WTC11 (cell line): ENCODE measurements at regions of chr13 and their contacts with region 1.

Region 1: DNA sequence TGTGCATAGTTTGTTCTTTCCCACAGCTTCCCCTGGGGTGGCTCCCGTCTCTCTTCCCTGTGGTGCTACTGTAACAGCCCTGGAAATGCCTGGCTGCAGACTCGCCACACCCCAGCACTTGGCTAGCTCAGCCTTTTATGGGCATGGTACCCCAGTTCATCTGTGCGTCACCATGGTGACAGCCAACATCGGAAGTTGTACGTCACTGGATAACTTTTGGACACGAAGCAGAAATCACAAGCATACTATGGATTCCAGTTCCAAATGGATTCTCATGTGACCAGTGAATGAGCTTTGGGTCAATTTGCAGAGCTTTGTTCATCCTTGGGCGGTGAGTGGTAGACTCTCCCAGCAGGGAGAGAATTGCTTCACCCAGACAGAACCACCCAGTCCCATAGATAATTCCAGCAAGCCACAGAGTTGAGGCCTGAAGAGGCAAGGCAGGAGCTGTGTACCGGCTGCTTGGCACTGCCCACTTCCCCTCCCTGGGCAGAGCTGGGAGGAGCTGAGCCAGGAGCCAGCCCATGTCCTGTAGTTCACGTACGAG is 54.4 kb downstream of the COL4A2 start:
- DNase-seq: no peak
- ATAC-seq: no peak
- H3K4me3 Mint-ChIP-seq: no peak overlapping the region
- H3K27ac Mint-ChIP-seq: peak overlapping the region; percentile 84; the same call in 1 of the 2 replicates
- H3K4me1 Mint-ChIP-seq: peaks cover 4% of the 10 kb centered on the region
- H3K27me3 Mint-ChIP-seq: no peaks in the 10 kb centered on the region; the same call in 1 of the 2 replicates
- CTCF ChIP-seq: no peak

Region 2: GRCh38 chr13:110379905-110380341 is 18.5 kb after region 1 on chr13:
- CTCF ChIA-PET with region 1: interaction called, 33 read pairs
- POLR2A ChIA-PET with region 1: no interaction called
- DNase-seq: no peak
- ATAC-seq: peak; percentile 86
- H3K4me3 Mint-ChIP-seq: peak overlapping the region; percentile 37
- H3K27ac Mint-ChIP-seq: no peak overlapping the region; the same call in 1 of the 2 replicates
- H3K4me1 Mint-ChIP-seq: peaks cover 28% of the 10 kb centered on the region
- H3K27me3 Mint-ChIP-seq: peaks cover 31% of the 10 kb centered on the region
- CTCF ChIP-seq: no peak